Caco-2 (cell line): ENCODE measurements at regions of chr22 and their contacts with region 1.

Region 1: DNA sequence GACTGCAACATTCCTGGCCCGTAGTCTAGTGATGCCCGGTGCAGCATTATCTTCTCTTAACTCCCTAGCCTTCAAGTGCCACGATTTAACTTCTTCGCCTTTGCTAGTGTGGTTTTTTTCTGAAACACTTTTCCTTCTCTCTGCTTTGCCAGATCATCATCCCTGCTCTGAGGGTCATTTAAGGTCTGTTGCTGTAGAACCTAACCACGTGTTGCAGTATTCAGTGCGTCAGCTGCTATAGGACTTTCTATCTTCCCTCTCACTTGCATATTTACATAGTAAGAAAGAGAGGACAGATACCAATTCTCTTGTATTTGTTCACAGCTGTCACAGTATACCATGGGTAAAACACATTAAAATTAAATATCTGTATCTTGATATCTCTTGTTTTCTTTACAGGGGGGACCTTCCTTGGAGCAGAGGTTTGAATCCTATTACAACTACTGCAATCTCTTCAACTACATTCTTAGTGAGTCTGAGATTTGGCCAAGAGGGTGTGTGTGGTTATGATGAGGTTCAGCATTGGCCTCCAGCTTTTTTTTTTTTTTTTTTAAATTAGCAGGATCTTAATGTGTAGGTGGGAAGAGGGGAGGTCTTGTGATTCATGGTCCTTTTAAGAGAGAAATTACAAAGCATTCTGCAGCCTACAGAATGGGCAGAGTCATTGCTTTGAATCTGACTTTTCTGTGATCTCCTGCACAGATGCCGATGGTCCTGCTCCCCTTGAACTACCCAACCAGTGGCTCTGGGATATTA is 13.5 kb downstream of the EIF3L start:
- DNase-seq: no peak
- H3K4me3 ChIP-seq: no peak overlapping the region
- H3K4me3 Mint-ChIP-seq: no peak overlapping the region
- H3K27ac Mint-ChIP-seq: no peak overlapping the region
- H3K4me1 ChIP-seq: no peaks in the 10 kb centered on the region
- H3K4me1 Mint-ChIP-seq: peaks cover 14% of the 10 kb centered on the region
- H3K27me3 ChIP-seq: no peaks in the 10 kb centered on the region
- H3K27me3 Mint-ChIP-seq: no peaks in the 10 kb centered on the region
- CTCF ChIP-seq: no peak

Region 2: GRCh38 chr22:37817705-37818408 is 44.9 kb before region 1 on chr22:
- CTCF ChIA-PET with region 1: interaction called, 41 read pairs
- POLR2A ChIA-PET with region 1: no interaction called
- intact Hi-C with region 1: loop called (anchors 1 kb)
- DNase-seq: peak; percentile 72 to 91
- H3K4me3 ChIP-seq: no peak overlapping the region
- H3K4me3 Mint-ChIP-seq: peak overlapping the region; percentile 37
- H3K27ac Mint-ChIP-seq: no peak overlapping the region
- H3K4me1 ChIP-seq: peaks cover 9% of the 10 kb centered on the region
- H3K4me1 Mint-ChIP-seq: peaks cover 12% of the 10 kb centered on the region
- H3K27me3 ChIP-seq: no peaks in the 10 kb centered on the region
- H3K27me3 Mint-ChIP-seq: no peaks in the 10 kb centered on the region
- CTCF ChIP-seq: peak; percentile 85 to 87

Region 3: DNA sequence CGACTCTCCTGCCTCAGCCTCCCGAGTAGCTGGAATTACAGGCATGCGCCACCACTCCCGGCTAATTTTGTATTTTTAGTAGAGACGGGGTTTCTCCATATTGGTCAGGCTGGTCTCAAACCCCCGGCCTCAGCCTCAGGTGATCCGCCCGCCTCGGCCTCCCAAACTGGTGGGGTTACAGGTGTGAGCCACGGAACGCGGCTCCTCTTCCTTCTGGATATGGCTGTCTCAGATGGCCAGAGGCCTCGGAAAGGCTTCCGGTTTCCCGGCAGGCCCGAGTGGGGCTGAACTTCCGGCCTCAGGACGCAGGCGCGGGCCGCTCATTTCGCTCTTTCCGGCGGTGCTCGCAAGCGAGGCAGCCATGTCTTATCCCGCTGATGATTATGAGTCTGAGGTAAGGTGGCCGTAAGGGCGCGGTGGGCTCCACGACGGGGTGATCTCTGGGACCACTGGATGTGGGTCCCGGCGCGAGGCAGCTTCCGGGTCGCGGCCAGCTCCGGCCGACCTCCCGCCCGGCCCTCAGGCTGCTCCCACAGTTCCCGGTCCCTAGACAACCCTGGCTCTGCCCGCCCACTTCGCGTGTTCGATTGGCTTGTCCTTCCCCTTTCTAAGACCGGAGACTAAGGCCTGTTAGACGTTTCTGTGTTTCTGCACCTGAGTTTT is 13.5 kb before region 1 on chr22 and contains the start of gene EIF3L:
- CTCF ChIA-PET with region 1: interaction called, 6 read pairs
- POLR2A ChIA-PET with region 1: no interaction called
- intact Hi-C with region 1: loop called (anchors 2 kb)
- DNase-seq: peak; percentile 89 to 92
- H3K4me3 ChIP-seq: peak within 1 kb of the TSS; percentile 77
- H3K4me3 Mint-ChIP-seq: peak within 1 kb of the TSS; percentile 95
- H3K27ac Mint-ChIP-seq: peak within 1 kb of the TSS; percentile 91
- H3K4me1 ChIP-seq: no peaks in the 10 kb centered on the region
- H3K4me1 Mint-ChIP-seq: peaks cover 7% of the 10 kb centered on the region
- H3K27me3 ChIP-seq: no peaks in the 10 kb centered on the region
- H3K27me3 Mint-ChIP-seq: no peaks in the 10 kb centered on the region
- CTCF ChIP-seq: no peak
- total RNA-seq, gene EIF3L: 524 and 554 TPM in 2 replicates

Region 4: DNA sequence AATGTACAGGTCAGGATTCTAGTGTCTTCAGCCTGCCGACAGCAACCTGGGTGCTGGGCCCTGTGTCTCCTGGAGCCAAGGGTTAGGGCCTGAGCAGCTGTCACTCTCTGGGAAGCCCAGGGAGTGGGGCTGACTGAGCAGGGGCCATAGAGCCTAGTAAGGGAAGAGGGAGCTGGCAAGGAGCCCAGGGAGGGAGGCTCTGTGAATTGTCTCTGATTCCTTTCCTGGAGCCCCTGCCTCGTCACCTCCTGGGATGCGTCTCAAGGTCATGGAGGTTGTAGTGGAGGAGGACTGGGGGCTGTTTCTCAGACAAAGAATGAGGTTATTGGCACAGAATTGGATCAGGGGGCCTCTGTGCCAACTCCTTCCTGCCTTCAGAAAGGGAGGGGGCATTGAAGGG is 109.8 kb after region 1 on chr22:
- CTCF ChIA-PET with region 1: no interaction called
- POLR2A ChIA-PET with region 1: no interaction called
- intact Hi-C with region 1: no loop called
- DNase-seq: no peak
- H3K4me3 ChIP-seq: no peak overlapping the region
- H3K4me3 Mint-ChIP-seq: no peak overlapping the region
- H3K27ac Mint-ChIP-seq: no peak overlapping the region
- H3K4me1 ChIP-seq: no peaks in the 10 kb centered on the region
- H3K4me1 Mint-ChIP-seq: no peaks in the 10 kb centered on the region
- H3K27me3 ChIP-seq: no peaks in the 10 kb centered on the region
- H3K27me3 Mint-ChIP-seq: no peaks in the 10 kb centered on the region
- CTCF ChIP-seq: no peak